PC-9 (cell line): ENCODE measurements at regions of chr1 and their contacts with region 1.

Region 1: GRCh38 chr1:207084701-207085180 is 3.9 kb upstream of the C4BPB start:
- DNase-seq: peak; percentile 55 to 59
- H3K4me3 ChIP-seq: no peak overlapping the region
- H3K27ac ChIP-seq: no peak overlapping the region
- H3K4me1 ChIP-seq: peaks cover 30% of the 10 kb centered on the region
- H3K27me3 ChIP-seq: no peaks in the 10 kb centered on the region
- CTCF ChIP-seq: peak; percentile 76

Region 2: DNA sequence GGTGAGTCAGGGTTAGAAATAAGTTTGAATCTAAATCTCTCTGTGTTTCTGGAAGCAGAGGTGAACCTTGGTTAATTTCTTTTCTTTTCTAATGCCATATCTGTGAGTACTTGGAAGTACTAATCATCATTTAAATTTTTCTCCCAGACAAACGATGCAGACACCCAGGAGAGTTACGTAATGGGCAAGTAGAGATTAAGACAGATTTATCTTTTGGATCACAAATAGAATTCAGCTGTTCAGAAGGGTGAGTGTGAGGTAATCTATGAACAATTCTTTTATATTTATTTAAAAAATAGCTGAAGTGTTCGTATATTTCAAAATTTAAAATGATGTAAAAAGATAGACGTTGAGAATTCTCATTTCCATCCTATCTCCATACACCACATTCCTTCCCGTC is 30.5 kb after region 1 on chr1:
- CTCF ChIA-PET with region 1: no interaction called
- POLR2A ChIA-PET with region 1: no interaction called
- intact Hi-C with region 1: no loop called
- DNase-seq: no peak
- H3K4me3 ChIP-seq: no peak overlapping the region
- H3K27ac ChIP-seq: no peak overlapping the region
- H3K4me1 ChIP-seq: no peaks in the 10 kb centered on the region
- H3K27me3 ChIP-seq: no peaks in the 10 kb centered on the region
- CTCF ChIP-seq: no peak

Region 3: DNA sequence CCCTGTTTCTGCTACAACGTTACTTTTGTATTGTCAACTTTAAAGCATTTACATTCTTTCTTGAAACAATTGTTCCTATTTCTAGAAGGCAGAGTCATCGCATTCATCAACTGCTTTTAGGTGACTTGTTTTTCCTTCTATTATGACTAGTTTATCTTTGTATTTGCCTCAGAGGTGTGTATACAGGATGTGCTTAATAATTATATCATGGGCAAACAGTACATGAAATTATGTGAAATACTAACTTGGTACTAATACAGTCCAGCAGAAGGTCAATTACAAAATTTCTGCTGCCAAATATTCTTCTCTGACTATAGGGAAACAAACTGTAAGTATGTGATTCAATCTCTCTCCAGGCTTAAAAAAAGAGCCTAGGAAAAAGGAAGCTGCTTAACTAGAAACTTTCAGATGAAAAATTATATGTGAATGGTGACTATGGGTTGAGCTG is 120.9 kb after region 1 on chr1:
- CTCF ChIA-PET with region 1: no interaction called
- POLR2A ChIA-PET with region 1: no interaction called
- intact Hi-C with region 1: loop called (anchors 10 kb)
- DNase-seq: peak in 1 of 2 experiments; percentile 37
- H3K4me3 ChIP-seq: no peak overlapping the region
- H3K27ac ChIP-seq: peak overlapping the region; percentile 85
- H3K4me1 ChIP-seq: peaks cover 19% of the 10 kb centered on the region
- H3K27me3 ChIP-seq: no peaks in the 10 kb centered on the region
- CTCF ChIP-seq: no peak

Region 4: GRCh38 chr1:207404849-207405525 is 320.2 kb after region 1 on chr1:
- CTCF ChIA-PET with region 1: interaction called, 14 read pairs
- POLR2A ChIA-PET with region 1: no interaction called
- intact Hi-C with region 1: loop called (anchors 1 kb)
- DNase-seq: peak in 1 of 2 experiments; percentile 76
- H3K4me3 ChIP-seq: no peak overlapping the region
- H3K27ac ChIP-seq: no peak overlapping the region
- H3K4me1 ChIP-seq: peaks cover 11% of the 10 kb centered on the region
- H3K27me3 ChIP-seq: no peaks in the 10 kb centered on the region
- CTCF ChIP-seq: peak; percentile 87